ENCODE measurements at regions of chr22 and their contacts with region 1.

Region 1: DNA sequence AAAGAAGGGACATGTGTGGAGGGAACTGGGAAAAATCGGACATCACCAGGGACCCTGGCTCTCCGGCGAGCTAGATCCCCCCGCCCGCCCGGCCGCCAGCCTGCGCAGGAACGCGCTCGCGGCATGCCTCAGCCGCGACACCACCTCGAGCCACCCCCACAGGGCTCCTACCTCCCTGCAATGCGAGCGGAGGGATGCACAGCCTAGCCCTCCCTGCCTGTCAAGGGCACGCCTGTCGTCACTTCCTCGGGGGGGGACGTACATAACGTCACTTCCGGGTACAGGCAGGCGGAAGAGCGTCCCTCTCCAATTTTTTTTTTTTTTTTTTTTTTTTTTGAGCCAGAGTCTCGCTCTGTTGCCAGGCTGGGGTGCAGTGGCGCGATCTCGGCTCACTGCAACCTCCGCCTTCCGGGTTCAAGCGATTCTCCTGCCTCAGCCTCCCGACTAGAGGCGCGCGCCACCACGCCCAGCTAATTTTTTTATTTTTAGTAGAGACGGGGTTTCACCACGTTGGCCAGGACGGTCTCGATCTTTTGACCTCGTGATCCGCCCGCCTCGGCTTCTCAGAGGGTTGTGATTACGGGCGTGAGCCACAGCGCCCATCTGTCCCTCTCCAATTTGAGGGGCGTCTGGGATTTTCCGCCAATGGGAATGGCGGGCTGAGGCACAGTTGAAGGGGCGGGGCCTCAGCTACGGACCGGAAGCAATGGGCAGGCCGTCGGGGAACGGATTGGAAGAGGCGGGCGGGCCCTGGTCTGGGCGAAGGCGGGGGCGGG is at the start of gene TXN2:
- DNase-seq: peak; percentile 90 to 95
- H3K4me3 ChIP-seq: peak within 1 kb of the TSS; percentile 70
- H3K27ac ChIP-seq: peak within 1 kb of the TSS; percentile 95
- H3K4me1 ChIP-seq: peaks cover 38% of the 10 kb centered on the region
- H3K27me3 ChIP-seq: no peaks in the 10 kb centered on the region
- CTCF ChIP-seq: no peak
- total RNA-seq, gene TXN2: 89.0 and 95.1 TPM in 2 replicates

Region 2: GRCh38 chr22:36257948-36258670 is 223.5 kb before region 1 on chr22:
- CTCF ChIA-PET with region 1: interaction called, 13 read pairs
- POLR2A ChIA-PET with region 1: no interaction called
- intact Hi-C with region 1: no loop called
- DNase-seq: no peak
- H3K4me3 ChIP-seq: no peak overlapping the region
- H3K27ac ChIP-seq: no peak overlapping the region
- H3K4me1 ChIP-seq: no peaks in the 10 kb centered on the region
- H3K27me3 ChIP-seq: no peaks in the 10 kb centered on the region
- CTCF ChIP-seq: no peak

Region 3: DNA sequence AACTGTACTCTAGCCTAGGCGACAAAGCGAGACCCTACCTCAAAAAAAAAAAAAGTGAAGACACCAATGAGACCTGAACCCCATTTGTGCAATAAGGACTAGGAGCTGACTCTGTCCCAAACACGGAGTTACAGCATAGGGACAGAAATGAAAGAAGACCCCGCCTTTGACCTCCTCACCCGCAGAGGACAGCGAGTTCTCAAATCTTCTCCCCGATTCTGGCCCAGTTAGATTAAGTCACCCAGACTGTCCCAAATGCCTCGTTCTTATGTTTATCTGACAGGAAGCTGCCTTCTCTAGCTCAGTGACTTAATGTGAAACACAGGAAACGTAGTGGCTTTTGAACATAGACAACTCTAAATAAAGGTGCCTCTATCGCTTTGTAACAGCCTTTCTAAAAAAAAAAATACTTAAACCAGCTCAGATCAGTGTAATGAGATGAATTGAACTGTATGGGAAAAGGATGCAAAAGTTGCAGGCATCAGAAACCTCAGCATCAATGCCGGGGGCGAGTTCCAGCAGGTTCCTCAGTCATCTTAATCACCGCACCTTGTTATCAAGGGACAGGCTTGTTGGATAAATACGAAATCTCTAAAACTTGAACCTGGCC is 104.5 kb before region 1 on chr22:
- CTCF ChIA-PET with region 1: no interaction called
- POLR2A ChIA-PET with region 1: interaction called, 15 read pairs
- intact Hi-C with region 1: no loop called
- DNase-seq: no peak
- H3K4me3 ChIP-seq: no peak overlapping the region
- H3K27ac ChIP-seq: peak overlapping the region; percentile 4; the same call in 1 of the 2 replicates
- H3K4me1 ChIP-seq: peaks cover 93% of the 10 kb centered on the region
- H3K27me3 ChIP-seq: no peaks in the 10 kb centered on the region
- CTCF ChIP-seq: no peak

Region 4: GRCh38 chr22:36409911-36410756 is 71.4 kb before region 1 on chr22:
- CTCF ChIA-PET with region 1: no interaction called
- POLR2A ChIA-PET with region 1: interaction called, 17 read pairs
- intact Hi-C with region 1: no loop called
- DNase-seq: peak; percentile 99 to 100
- H3K4me3 ChIP-seq: peak overlapping the region; percentile 43
- H3K27ac ChIP-seq: peak overlapping the region; percentile 89
- H3K4me1 ChIP-seq: peaks cover 69% of the 10 kb centered on the region
- H3K27me3 ChIP-seq: no peaks in the 10 kb centered on the region
- CTCF ChIP-seq: 0 out of 2 replicates have a peak, but pooled peaks have one; percentile 30

Region 5: DNA sequence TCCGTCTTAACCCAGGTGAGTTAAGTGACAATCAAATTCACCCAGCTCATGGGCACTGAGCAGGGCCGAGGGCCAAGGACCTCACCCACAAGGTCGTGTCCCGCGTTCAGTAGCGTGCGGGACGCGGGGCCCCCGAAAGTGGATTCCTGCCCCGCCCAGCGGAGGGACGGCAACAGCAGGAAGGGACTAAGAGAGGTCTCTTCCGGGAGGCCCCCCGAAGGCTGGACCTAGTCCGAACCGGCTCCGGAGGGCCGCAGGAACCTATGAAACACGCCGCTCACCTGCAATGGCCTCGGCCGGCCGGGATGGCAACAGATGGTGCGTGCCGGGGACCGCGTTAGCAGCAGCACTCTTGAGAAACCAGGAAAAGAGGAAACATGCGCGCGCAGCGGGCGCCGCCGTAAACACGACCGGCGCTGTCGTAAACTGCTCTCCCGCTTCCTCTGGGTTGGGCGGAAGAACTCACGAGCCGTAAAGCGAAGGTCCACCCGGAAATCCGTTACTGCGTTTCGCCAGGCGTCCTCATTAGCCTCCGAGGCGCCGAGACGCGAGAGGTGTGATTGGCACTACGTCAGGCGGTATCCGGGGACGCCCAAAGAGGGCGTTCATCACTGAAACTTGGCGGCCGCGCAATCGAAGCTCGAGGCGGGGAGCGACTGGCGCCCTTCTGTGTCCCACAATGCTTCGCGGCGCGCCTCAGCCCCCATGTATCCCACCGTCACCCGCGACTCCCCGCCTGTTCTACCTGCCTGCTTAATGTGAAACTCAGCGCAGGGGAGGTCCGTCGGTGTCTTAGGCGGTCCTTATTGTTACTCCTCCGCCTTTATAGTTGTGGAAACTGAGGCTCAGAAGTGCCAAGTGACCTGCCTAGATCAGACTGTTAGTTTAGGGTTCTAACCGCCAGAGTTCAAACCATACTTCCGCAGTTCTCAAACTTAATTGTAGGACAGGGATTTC is 47.5 kb after region 1 on chr22 and contains the start of gene EIF3D:
- CTCF ChIA-PET with region 1: no interaction called
- POLR2A ChIA-PET with region 1: interaction called, 5 read pairs
- intact Hi-C with region 1: loop called (anchors 5 kb)
- DNase-seq: peak; percentile 99 to 100
- H3K4me3 ChIP-seq: peak within 1 kb of the TSS; percentile 90
- H3K27ac ChIP-seq: peak within 1 kb of the TSS; percentile 96
- H3K4me1 ChIP-seq: peaks cover 25% of the 10 kb centered on the region
- H3K27me3 ChIP-seq: no peaks in the 10 kb centered on the region
- CTCF ChIP-seq: peak; percentile 37; the same call in 1 of the 2 replicates
- total RNA-seq, gene EIF3D: 270 and 312 TPM in 2 replicates

Region 6: GRCh38 chr22:36612458-36612857 is 130.9 kb after region 1 on chr22:
- CTCF ChIA-PET with region 1: no interaction called
- POLR2A ChIA-PET with region 1: no interaction called
- intact Hi-C with region 1: no loop called
- DNase-seq: no peak
- H3K4me3 ChIP-seq: no peak overlapping the region
- H3K27ac ChIP-seq: no peak overlapping the region
- H3K4me1 ChIP-seq: peaks cover 18% of the 10 kb centered on the region
- H3K27me3 ChIP-seq: peaks cover 100% of the 10 kb centered on the region
- CTCF ChIP-seq: no peak